H1 (cell line): ENCODE measurements at regions of chr4 and their contacts with region 1.

Region 1: GRCh38 chr4:92506933-92507332 is 203.2 kb downstream of the GRID2 start:
- DNase-seq: no peak
- H3K4me3 ChIP-seq: no peak overlapping the region; a peak in 1 of 8 replicates
- H3K27ac ChIP-seq: no peak overlapping the region
- H3K4me1 ChIP-seq: peaks cover 0 to 17% (median 3%) of the 10 kb centered on the region in 4 experiments; a peak in 5 of 7 replicates
- H3K27me3 ChIP-seq: no peaks in the 10 kb centered on the region
- CTCF ChIP-seq: no peak
- EP300 ChIP-seq: no peak
- POLR2A ChIP-seq: no peak
- RAD21 ChIP-seq: no peak

Region 2: DNA sequence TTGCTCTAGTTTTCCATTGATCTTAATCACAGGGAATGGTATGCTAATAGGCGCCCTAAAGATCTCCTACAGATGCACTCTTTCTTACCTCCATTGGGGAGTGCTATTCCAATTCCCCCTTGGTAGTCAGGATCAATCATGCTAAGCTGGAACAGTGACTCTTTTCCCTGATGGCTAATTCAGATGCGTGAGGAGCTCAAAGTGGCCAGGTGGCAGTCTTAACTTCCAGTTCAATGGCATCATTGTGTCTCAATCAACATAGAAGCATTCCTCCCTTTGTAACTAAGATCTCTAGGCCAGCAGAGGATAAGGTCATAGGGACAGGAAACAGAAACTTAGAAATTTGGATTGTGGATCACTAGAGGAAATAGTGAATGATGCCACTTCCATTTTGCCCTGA is 13.6 kb after region 1 on chr4:
- CTCF ChIA-PET with region 1: interaction called, 5 read pairs
- POLR2A ChIA-PET with region 1: interaction called, 22 read pairs
- DNase-seq: peak in 1 of 2 experiments; percentile 88
- H3K4me3 ChIP-seq: peak overlapping the region in 1 of 4 experiments; percentile 44; a peak in 1 of 8 replicates
- H3K27ac ChIP-seq: no peak overlapping the region; the same call in 1 of the 2 replicates
- H3K4me1 ChIP-seq: peaks cover 0 to 23% (median 7%) of the 10 kb centered on the region in 4 experiments; a peak in 4 of 7 replicates
- H3K27me3 ChIP-seq: no peaks in the 10 kb centered on the region
- CTCF ChIP-seq: peak in 2 of 3 experiments; percentile 20 to 55; a peak in 2 of 4 replicates
- EP300 ChIP-seq: peak in 1 of 2 experiments; percentile 93; a peak in 1 of 3 replicates
- POLR2A ChIP-seq: no peak
- RAD21 ChIP-seq: peak; percentile 42 to 53

Region 3: DNA sequence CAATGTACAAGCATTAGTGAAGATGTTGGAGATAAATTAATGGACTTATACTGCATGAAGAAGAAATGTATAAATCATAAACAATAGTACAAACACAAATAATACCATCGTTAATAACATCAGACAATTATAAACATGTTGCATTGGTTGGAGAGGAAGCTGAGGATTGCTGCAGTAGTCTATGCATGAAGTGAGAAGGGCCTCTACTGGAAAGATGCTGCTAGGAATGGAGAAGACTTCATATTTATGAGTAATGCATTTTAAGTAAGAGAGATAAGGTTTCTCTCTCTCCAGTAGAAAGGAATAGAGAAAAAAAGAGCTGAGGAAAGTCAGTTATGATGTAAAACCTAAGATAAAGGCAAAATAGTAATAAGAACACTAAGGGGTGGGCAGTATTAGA is 44.7 kb after region 1 on chr4:
- CTCF ChIA-PET with region 1: no interaction called
- POLR2A ChIA-PET with region 1: no interaction called
- DNase-seq: no peak
- H3K4me3 ChIP-seq: no peak overlapping the region
- H3K27ac ChIP-seq: no peak overlapping the region
- H3K4me1 ChIP-seq: peaks cover 0 to 3% (median 1%) of the 10 kb centered on the region in 4 experiments; a peak in 3 of 7 replicates
- H3K27me3 ChIP-seq: peaks cover 0 to 2% (median 0%) of the 10 kb centered on the region in 4 experiments; a peak in 1 of 7 replicates
- CTCF ChIP-seq: peak in 1 of 3 experiments; percentile 7; a peak in 1 of 4 replicates
- EP300 ChIP-seq: no peak
- POLR2A ChIP-seq: no peak
- RAD21 ChIP-seq: peak; percentile 16 to 26; a peak in 2 of 4 replicates